Heart right ventricle (tissue), 16 donors: ENCODE measurements at regions of chr2 and their contacts with region 1.

Region 1: GRCh38 chr2:219521066-219521880 is 7.0 kb downstream of the ASIC4 start:
- DNase-seq: peak in 1 of 2 donors; percentile 45
- ATAC-seq: peak; percentile 58 to 79 (median 66)
- H3K4me3 ChIP-seq: no peak overlapping the region
- H3K27ac ChIP-seq: peak overlapping the region in 7 of 10 donors; percentile 35 to 81 (median 62)
- H3K4me1 ChIP-seq: peaks cover 14 to 52% (median 25%) of the 10 kb centered on the region in 9 donors
- H3K27me3 ChIP-seq: peaks cover 5 to 92% (median 41%) of the 10 kb centered on the region in 7 donors
- CTCF ChIP-seq: peak; percentile 18 to 69 (median 54)

Region 2: DNA sequence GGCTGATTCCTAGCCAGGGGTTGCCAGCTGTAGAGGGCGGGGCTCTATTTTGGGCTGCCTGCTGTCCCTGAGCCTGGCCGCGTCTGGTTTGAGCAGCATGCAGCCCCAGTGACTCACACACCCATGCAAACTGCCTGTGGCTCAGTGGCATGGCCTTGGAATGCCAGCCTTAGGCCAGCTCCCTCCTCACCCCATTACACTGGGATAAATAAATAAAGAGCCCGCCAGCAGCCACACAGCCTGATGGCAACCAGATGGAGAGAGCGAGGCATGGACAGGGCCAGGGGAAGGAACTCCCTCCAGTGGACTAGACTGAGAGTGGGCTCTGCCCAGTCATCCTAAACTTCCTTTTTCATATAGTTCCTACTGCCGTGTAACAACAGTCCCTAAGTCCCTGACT is 378.9 kb before region 1 on chr2:
- intact Hi-C with region 1: no loop called
- DNase-seq: no peak
- ATAC-seq: peak in 1 of 8 donors; percentile 16
- H3K4me3 ChIP-seq: no peak overlapping the region
- H3K27ac ChIP-seq: no peak overlapping the region
- H3K4me1 ChIP-seq: no peaks in the 10 kb centered on the region
- H3K27me3 ChIP-seq: no peaks in the 10 kb centered on the region
- CTCF ChIP-seq: no peak

Region 3: GRCh38 chr2:219459460-219460311 is 61.6 kb before region 1 on chr2:
- intact Hi-C with region 1: loop called in 1 of 10 experiments (anchors 2 kb)
- DNase-seq: peak; percentile 66 to 68
- ATAC-seq: peak; percentile 57 to 81 (median 70)
- H3K4me3 ChIP-seq: no peak overlapping the region
- H3K27ac ChIP-seq: peak overlapping the region; percentile 67 to 96 (median 90)
- H3K4me1 ChIP-seq: peaks cover 3 to 63% (median 11%) of the 10 kb centered on the region in 9 donors
- H3K27me3 ChIP-seq: peaks cover 0 to 5% (median 0%) of the 10 kb centered on the region in 7 donors
- CTCF ChIP-seq: peak; percentile 75 to 92 (median 87)

Region 4: GRCh38 chr2:219475697-219476651 is 45.3 kb before region 1 on chr2:
- intact Hi-C with region 1: loop called in 6 of 10 experiments (anchors 5 kb)
- DNase-seq: peak; percentile 66 to 77
- ATAC-seq: peak in 7 of 8 donors; percentile 41 to 81 (median 70)
- H3K4me3 ChIP-seq: no peak overlapping the region
- H3K27ac ChIP-seq: peak overlapping the region in 6 of 10 donors; percentile 49 to 78 (median 57)
- H3K4me1 ChIP-seq: peaks cover 0 to 41% (median 6%) of the 10 kb centered on the region in 9 donors
- H3K27me3 ChIP-seq: no peaks in the 10 kb centered on the region
- CTCF ChIP-seq: peak; percentile 64 to 93 (median 84)